ENCODE measurements at regions of chr3 and their contacts with region 1.

Region 1: GRCh38 chr3:149566292-149566975 is 91.4 kb downstream of the WWTR1 start:
- DNase-seq: no peak
- H3K4me3 ChIP-seq: no peak overlapping the region
- H3K27ac ChIP-seq: no peak overlapping the region
- H3K4me1 ChIP-seq: peaks cover 25% of the 10 kb centered on the region
- H3K27me3 ChIP-seq: no peaks in the 10 kb centered on the region
- CTCF ChIP-seq: no peak
- POLR2A ChIP-seq: no peak

Region 2: DNA sequence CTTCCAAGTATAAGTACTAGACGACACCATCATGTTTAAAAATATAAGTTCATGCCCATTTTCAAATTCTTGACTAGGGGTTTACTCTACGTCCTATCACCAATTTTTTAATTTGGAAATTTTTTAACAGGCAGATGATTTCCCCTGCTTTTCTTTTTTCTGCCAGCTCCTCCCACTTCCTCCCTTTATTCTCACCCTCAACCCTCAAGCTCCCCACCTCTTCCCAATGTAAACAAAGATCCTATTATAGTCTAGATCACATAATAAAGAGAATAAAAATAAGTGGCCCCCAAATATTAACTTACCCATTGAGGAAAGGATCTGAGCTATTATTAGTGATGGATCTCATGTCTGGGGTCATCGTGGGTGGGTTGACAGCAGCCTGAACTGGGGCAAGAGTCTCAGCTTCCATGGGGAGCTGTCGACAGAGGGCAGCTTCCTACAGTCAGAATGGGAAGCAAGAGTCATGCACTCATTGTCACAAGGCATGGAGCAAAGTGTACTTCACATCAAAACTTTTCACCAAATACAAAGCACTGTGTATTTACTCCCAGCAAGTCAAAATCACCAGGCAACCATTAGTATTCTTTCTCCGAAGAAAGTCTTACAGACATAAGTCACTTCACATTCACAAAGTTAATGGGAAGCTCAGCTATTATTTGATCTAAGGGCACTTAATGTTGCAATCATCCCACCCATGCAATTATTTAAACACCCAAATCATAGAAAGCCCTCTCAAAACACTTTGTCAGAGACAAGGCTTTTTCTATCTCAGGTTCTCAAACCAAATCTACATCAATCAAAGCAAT is 38.7 kb before region 1 on chr3:
- CTCF ChIA-PET with region 1: interaction called, 49 read pairs
- POLR2A ChIA-PET with region 1: no interaction called
- dilution Hi-C with region 1: no loop called
- intact Hi-C with region 1: loop called (anchors 2 kb)
- DNase-seq: peak; percentile 85
- H3K4me3 ChIP-seq: no peak overlapping the region
- H3K27ac ChIP-seq: peak overlapping the region; percentile 62
- H3K4me1 ChIP-seq: peaks cover 43% of the 10 kb centered on the region
- H3K27me3 ChIP-seq: no peaks in the 10 kb centered on the region
- CTCF ChIP-seq: peak in 1 of 2 donors; percentile 50
- POLR2A ChIP-seq: no peak

Region 3: GRCh38 chr3:149553781-149554451 is 12.5 kb before region 1 on chr3:
- CTCF ChIA-PET with region 1: interaction called, 46 read pairs
- POLR2A ChIA-PET with region 1: no interaction called
- dilution Hi-C with region 1: no loop called
- intact Hi-C with region 1: loop called (anchors 1 kb)
- DNase-seq: peak; percentile 85
- H3K4me3 ChIP-seq: peak overlapping the region in 1 of 3 experiments; percentile 13
- H3K27ac ChIP-seq: peak overlapping the region; percentile 88
- H3K4me1 ChIP-seq: peaks cover 46% of the 10 kb centered on the region
- H3K27me3 ChIP-seq: no peaks in the 10 kb centered on the region
- CTCF ChIP-seq: no peak
- POLR2A ChIP-seq: no peak

Region 4: DNA sequence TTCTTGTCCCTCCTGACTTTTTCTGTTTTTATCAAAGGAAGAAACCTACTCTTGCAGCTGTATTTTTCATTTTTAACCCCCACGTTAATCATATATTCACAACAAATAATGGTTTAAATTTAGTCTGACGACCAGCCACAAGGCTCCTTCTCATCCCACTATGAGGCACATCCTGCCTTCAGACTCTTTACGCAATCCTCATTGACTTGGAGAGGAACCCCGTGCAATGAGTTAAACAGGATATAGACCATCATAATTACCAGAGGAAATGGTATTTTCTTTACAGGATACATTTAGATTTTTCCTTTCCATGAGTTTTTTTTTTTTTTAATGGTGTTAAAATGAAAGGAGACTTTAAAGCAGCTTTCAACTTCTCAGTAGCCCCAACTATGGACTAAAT is 22.9 kb after region 1 on chr3:
- CTCF ChIA-PET with region 1: interaction called, 12 read pairs
- POLR2A ChIA-PET with region 1: interaction called, 3 read pairs
- dilution Hi-C with region 1: no loop called
- intact Hi-C with region 1: no loop called
- DNase-seq: peak; percentile 95
- H3K4me3 ChIP-seq: peak overlapping the region in 1 of 3 experiments; percentile 10
- H3K27ac ChIP-seq: peak overlapping the region; percentile 96
- H3K4me1 ChIP-seq: peaks cover 96% of the 10 kb centered on the region
- H3K27me3 ChIP-seq: no peaks in the 10 kb centered on the region
- CTCF ChIP-seq: no peak
- POLR2A ChIP-seq: peak; percentile 38

Region 5: DNA sequence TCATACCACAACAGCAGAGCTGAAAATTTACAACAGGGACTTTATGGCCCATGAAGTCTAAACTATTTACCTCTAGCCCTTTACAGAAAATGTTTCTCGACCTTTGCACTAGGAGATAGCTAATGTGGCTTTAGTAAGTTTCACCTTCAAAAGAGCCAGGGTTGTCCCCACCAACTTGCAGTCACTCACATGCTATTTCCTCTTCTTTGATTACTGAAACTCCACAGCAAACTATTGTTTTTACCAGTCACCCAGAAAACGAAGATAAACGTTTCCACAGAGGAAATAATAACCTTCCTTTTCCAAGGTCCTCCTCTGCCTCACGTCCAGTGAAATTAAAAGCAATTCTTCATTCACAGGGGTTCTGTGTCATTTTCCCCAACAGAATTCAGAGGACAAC is 43.2 kb after region 1 on chr3:
- CTCF ChIA-PET with region 1: interaction called, 18 read pairs
- POLR2A ChIA-PET with region 1: interaction called, 3 read pairs
- dilution Hi-C with region 1: no loop called
- intact Hi-C with region 1: no loop called
- DNase-seq: peak; percentile 92
- H3K4me3 ChIP-seq: no peak overlapping the region
- H3K27ac ChIP-seq: peak overlapping the region; percentile 83
- H3K4me1 ChIP-seq: peaks cover 99% of the 10 kb centered on the region
- H3K27me3 ChIP-seq: no peaks in the 10 kb centered on the region
- CTCF ChIP-seq: no peak
- POLR2A ChIP-seq: no peak

Region 6: GRCh38 chr3:149717391-149718056 is 151.1 kb after region 1 on chr3:
- CTCF ChIA-PET with region 1: interaction called, 40 read pairs
- POLR2A ChIA-PET with region 1: no interaction called
- dilution Hi-C with region 1: no loop called
- intact Hi-C with region 1: loop called (anchors 1 kb)
- DNase-seq: peak; percentile 87
- H3K4me3 ChIP-seq: no peak overlapping the region
- H3K27ac ChIP-seq: no peak overlapping the region
- H3K4me1 ChIP-seq: peaks cover 15% of the 10 kb centered on the region
- H3K27me3 ChIP-seq: no peaks in the 10 kb centered on the region
- CTCF ChIP-seq: peak; percentile 54 to 58
- POLR2A ChIP-seq: no peak

Region 7: GRCh38 chr3:149771652-149772271 is 205.3 kb after region 1 on chr3:
- CTCF ChIA-PET with region 1: interaction called, 10 read pairs
- POLR2A ChIA-PET with region 1: no interaction called
- dilution Hi-C with region 1: no loop called
- intact Hi-C with region 1: loop called (anchors 5 kb)
- DNase-seq: peak; percentile 58
- H3K4me3 ChIP-seq: no peak overlapping the region
- H3K27ac ChIP-seq: no peak overlapping the region
- H3K4me1 ChIP-seq: no peaks in the 10 kb centered on the region
- H3K27me3 ChIP-seq: peaks cover 3% of the 10 kb centered on the region in 2 experiments
- CTCF ChIP-seq: peak; percentile 70 to 83
- POLR2A ChIP-seq: no peak

Region 8: GRCh38 chr3:149790268-149790667 is 223.8 kb after region 1 on chr3:
- CTCF ChIA-PET with region 1: no interaction called
- POLR2A ChIA-PET with region 1: no interaction called
- dilution Hi-C with region 1: no loop called
- intact Hi-C with region 1: no loop called
- DNase-seq: no peak
- H3K4me3 ChIP-seq: no peak overlapping the region
- H3K27ac ChIP-seq: no peak overlapping the region
- H3K4me1 ChIP-seq: no peaks in the 10 kb centered on the region
- H3K27me3 ChIP-seq: peaks cover 11 to 15% of the 10 kb centered on the region in 2 experiments
- CTCF ChIP-seq: no peak
- POLR2A ChIP-seq: no peak

Measured in endothelial cell of umbilical vein (primary cell).